Posterior vena cava (tissue), 2 donors: ENCODE measurements at regions of chr18 and their contacts with region 1.

Region 1: DNA sequence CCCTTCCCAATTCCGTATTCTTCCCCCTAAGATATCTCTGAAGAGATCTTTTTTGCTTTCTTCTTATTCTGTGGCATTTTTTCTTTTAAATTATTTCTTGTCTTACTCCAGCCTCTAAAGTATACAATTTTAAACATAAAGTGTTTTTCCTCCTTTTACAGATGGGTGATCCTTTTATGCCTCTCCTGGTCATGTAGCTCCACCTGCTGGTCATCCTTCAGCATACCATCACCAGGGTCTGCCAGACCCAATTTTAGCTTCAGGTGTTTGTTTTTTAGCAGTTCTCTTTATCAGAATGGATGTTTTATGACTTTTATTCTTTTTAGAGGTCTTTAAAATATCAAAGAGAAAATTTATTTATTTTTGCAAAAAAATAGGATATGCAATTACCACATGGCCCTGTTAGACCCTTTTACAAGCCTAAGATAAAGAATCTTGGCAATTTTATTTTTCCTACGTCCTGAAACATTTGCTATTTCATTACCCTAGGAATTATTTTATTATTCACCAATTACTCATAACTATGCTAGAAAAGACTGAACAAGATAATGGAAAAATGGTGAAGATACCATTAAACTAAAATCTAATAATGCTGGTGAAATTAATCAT is 55.5 kb downstream of the PIGN start:
- DNase-seq: no peak

Region 2: DNA sequence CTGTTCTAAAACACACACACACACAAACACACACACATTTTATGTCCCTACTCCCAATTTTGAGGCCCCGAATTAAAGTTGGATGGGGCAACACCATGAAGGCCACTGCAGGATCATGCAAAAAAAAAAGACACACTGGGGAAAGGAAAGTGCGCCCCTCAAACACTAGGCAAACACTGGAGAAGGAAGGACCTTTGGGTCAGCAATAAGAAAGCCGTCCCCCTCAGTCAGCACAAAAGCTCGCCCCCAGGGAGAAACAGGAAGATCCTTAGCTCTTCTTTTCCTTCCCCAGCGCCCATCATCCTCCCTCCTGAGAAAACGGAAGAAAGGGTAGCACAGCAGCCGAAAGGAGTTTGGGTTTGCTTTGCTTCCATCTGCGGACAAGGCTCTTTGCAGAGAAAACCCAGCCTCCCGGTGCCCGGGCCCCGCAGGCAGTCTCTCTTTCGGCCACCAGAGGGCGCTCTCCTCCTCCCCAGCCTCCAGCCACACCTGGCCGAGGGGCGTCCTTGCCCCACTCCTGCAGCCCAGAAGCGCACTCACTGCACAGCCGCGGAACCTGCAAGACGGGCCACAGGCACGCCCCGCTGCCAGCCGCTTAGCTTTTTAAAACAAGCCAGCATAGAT is 549.7 kb before region 1 on chr18:
- intact Hi-C with region 1: loop called in 1 of 2 experiments (anchors 5 kb)
- DNase-seq: peak; percentile 91

Region 3: GRCh38 chr18:61635901-61636528 is 495.4 kb before region 1 on chr18:
- intact Hi-C with region 1: loop called in 1 of 2 experiments (anchors 5 kb)
- DNase-seq: no peak

Region 4: GRCh38 chr18:62088156-62088555 is 43.2 kb before region 1 on chr18:
- intact Hi-C with region 1: no loop called
- DNase-seq: no peak